ENCODE measurements at regions of chr13 and their contacts with region 1.

Region 1: GRCh38 chr13:99176309-99177276 is 24.1 kb upstream of the UBAC2 start:
- DNase-seq: peak; percentile 86
- CTCF ChIP-seq: peak; percentile 88

Region 2: GRCh38 chr13:97492257-97492656 is 1684.3 kb before region 1 on chr13:
- CTCF ChIA-PET with region 1: no interaction called
- POLR2A ChIA-PET with region 1: no interaction called
- DNase-seq: no peak
- CTCF ChIP-seq: no peak

Region 3: DNA sequence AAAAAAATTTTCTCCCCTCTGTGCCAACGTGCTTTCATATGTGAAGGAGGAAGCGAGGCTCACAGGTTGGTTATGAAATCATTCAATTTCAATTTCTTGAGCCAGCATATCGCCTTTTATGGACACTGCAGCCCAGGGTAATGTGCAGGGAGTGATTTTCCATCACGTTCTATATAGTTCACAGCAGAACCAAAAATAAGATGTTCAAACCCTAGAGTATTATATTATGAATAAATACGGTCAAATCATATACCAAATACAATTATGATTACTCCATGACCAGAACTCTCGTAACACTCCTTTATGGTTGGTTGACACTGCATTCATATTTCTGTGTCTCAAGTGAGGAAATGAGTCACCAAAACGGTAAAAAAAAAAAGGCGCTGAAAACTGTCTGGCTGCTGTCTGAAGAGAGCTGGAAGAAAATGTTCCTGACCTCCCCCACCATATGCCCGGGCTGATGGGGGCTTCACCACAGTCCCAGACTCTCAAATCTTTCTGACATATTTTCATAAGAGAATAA is 51.7 kb before region 1 on chr13:
- CTCF ChIA-PET with region 1: no interaction called
- POLR2A ChIA-PET with region 1: no interaction called
- DNase-seq: peak; percentile 45
- CTCF ChIP-seq: no peak

Region 4: GRCh38 chr13:99200432-99201167 is 24.0 kb after region 1 on chr13 and contains the start of gene UBAC2:
- CTCF ChIA-PET with region 1: interaction called, 24 read pairs
- POLR2A ChIA-PET with region 1: interaction called, 3 read pairs
- DNase-seq: peak; percentile 99
- CTCF ChIP-seq: peak; percentile 6

Region 5: DNA sequence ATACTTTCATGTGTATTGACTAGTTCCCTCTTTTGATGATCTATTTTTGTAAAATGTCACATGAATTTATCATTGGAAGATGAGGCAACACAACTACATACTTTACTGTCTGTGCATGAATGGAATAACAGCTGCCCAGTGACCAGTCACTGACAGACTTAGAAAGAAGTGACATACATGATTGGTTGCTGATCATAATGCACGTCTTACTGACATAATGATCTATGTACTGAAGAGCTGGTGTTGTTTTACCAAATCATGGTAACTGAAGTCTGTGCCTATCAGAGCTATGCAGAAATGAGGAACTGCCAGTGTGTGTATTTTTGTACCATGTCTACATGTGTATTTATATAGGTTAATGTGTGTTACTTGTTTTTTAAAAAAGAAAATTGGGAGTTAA is 55.1 kb after region 1 on chr13:
- CTCF ChIA-PET with region 1: interaction called, 12 read pairs
- POLR2A ChIA-PET with region 1: no interaction called
- DNase-seq: no peak
- CTCF ChIP-seq: no peak

Region 6: GRCh38 chr13:99258210-99258860 is 81.7 kb after region 1 on chr13 and contains the start of gene GPR18:
- CTCF ChIA-PET with region 1: interaction called, 290 read pairs
- POLR2A ChIA-PET with region 1: no interaction called
- DNase-seq: peak; percentile 56
- CTCF ChIP-seq: no peak

Region 7: GRCh38 chr13:99425485-99426341 is 249.1 kb after region 1 on chr13:
- CTCF ChIA-PET with region 1: no interaction called
- POLR2A ChIA-PET with region 1: no interaction called
- DNase-seq: peak; percentile 71
- CTCF ChIP-seq: no peak

Measured in GM10248 (cell line).